GM10248 (cell line): ENCODE measurements at regions of chr14 and their contacts with region 1.

Region 1: GRCh38 chr14:102694530-102695166 is 82.6 kb upstream of the TRAF3 start:
- DNase-seq: peak; percentile 62
- CTCF ChIP-seq: peak; percentile 77

Region 2: DNA sequence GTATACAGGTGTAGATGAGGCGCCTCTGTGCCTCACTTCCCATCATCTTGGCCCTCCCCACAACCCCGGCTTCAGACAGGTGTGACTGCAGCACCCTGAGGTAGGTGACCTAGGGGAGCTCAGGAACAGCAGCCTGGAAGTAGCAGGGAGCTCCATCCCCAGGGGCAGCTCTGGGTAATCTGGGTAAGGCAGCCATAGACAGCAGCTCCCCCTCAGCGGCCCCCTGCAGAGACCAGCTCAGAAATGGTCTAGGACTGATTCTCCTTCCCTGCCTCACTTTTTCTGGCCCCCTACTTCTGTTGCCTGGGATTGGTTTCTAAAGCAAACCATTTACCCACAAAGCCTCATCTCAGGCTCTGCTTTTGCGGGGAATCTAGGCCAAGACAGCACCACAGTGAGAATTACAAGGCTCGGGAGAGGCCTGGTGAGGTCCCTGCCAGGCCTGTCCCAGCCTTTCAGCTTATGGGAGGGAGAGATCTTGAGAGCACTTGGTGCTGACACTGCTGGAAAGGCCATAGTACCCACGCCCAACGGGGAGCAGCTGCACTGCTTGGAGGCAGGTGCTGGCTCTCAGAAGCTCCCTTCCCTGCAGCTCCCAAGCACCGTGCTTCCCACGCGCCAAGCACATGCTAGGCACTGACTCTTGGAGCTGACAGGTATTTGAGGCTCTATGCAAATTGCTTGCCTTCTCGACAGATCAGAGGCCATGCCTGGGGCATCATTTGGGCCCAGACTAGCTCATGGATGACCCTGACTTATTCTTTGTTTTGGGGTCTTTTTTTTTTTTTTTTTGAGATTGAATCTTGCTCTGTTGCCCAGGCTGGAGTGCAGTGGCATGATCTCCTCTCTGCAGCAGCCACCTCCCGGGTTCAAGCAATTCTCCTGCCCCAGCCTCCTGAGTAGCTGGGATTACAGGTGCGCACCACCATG is 37.5 kb after region 1 on chr14:
- CTCF ChIA-PET with region 1: interaction called, 11 read pairs
- POLR2A ChIA-PET with region 1: no interaction called
- DNase-seq: no peak
- CTCF ChIP-seq: no peak

Region 3: DNA sequence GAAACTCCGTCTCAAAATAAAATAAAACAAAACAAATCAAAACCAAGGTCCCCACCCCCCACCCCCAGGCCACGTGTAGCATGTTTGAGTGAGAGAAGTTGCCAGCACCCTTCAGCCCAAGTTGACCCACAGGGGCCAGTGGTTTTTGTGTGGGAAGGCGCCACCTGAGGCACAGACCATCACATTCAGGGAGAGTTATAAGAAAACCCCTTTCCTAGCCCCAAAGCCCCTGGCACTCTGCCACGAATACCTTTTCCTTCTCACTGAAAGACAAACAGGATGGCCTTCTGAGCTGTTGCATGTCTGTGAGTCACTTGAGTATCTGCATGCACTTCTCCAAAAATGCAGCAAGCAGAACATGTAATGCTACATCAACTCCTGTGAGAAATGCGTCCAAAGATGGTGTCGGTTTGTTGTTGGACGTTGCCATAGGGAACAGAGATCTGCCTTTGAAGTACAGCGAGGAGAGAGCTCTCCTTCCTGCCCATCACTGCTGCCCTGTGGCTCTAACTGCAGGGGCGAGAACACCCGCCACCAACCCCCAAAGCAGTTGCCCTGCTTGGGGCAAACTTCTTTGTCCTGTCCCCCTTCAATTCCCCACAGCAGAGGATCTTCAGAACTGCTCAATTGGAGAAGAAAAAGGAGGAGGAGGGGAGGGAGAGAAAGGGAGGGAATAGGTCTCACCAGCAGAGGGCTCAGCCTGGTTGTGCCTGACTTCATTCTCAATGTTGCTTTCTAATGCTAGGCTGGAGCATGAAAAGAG is 79.9 kb after region 1 on chr14:
- CTCF ChIA-PET with region 1: interaction called, 51 read pairs
- POLR2A ChIA-PET with region 1: no interaction called
- DNase-seq: peak; percentile 78
- CTCF ChIP-seq: peak; percentile 68

Region 4: GRCh38 chr14:102870994-102871831 is 176.6 kb after region 1 on chr14:
- CTCF ChIA-PET with region 1: interaction called, 15 read pairs
- POLR2A ChIA-PET with region 1: no interaction called
- DNase-seq: no peak
- CTCF ChIP-seq: no peak

Region 5: GRCh38 chr14:102917469-102918211 is 223.0 kb after region 1 on chr14:
- CTCF ChIA-PET with region 1: interaction called, 27 read pairs
- POLR2A ChIA-PET with region 1: no interaction called
- DNase-seq: peak; percentile 84
- CTCF ChIP-seq: peak; percentile 71